HEK293T (cell line): ENCODE measurements at regions of chr14 and their contacts with region 1.

Region 1: DNA sequence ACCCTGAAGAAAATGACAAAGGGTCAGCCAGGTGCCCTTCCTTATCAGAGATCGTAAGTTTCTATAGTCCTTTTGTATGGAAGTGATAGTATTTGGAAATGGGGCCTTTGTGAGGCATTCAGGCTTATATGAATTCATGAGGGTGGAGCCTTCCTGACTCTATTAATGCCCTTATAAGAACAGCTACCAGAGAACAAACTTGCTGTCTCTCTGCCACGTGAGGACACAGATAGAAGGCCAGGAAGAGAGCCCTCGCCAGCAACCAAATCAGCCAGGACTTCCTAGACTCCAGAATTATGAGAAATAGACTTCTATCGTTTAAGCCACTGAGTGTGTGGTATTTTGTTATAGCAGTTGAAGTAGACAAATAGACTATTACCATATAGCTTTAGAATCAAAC is 36.7 kb downstream of the TRMT5 start:
- DNase-seq: no peak

Region 2: DNA sequence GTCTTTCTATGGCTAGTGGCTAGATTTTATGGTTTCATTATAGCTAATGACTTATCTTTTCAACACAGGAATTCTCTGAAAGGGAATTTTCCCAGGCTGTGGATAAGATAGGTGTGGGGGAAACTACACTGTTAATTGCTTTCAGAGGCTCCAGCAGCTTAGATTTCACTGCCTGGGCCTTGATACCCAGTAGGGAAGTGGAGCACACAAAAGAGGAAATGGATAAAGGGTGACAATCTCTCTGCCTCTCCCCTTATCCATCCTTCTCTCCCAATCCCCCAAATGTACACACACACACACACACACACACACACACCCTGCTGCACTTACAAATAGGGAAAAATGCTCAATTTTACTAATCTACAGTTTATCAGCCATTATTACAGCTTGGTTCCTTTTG is 239.1 kb before region 1 on chr14:
- CTCF ChIA-PET with region 1: interaction called, 10 read pairs
- POLR2A ChIA-PET with region 1: no interaction called
- DNase-seq: no peak

Region 3: GRCh38 chr14:60926002-60926401 is 18.2 kb before region 1 on chr14:
- CTCF ChIA-PET with region 1: no interaction called
- POLR2A ChIA-PET with region 1: no interaction called
- DNase-seq: no peak